ENCODE measurements at regions of chr11 and their contacts with region 1.

Region 1: DNA sequence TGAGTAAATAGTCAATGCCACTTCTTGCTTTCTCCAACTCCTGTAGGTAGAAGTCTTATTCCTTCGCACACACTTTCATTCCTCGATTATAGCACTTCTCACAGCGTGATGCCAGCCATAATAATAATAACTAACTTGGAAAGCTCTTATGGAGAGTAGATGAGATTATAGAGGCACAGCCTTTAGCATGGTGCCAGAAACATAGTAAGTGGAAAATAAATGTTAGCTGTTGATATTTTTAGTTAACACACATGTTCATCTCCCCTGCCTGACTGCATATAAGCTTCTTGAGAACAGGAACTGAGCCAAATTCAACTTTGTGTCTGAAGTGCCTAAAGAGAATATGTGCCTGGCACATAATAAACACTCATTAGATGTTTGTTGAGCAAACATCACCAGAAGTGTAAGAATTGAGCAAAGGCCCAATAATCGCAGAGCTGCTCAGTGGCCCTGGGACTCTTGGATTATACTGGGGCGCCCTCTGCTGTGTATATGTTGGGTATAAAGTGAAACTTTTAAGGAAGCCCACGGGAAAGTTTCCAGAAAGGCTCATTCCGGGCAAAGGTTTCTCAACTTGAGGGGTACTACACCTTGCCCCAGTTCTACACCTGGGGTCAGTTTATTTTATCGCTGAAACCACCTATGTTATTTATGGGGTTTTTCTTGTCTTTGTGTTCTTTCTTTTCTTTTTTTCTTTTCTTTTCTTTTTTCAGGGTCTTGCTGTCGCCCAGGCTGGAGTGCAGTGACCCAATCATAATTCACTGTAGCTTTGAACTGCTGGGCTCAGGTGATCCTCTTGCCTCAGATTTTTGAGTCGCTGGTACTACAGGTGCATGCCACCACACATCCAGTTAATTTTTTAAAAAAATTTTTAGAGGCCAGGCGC is 22.3 kb downstream of the SLN start:
- DNase-seq: peak; percentile 60
- H3K4me3 Mint-ChIP-seq: no peak overlapping the region
- H3K27ac Mint-ChIP-seq: no peak overlapping the region
- H3K4me1 Mint-ChIP-seq: peaks cover 4% of the 10 kb centered on the region
- H3K27me3 Mint-ChIP-seq: peaks cover 21% of the 10 kb centered on the region

Region 2: DNA sequence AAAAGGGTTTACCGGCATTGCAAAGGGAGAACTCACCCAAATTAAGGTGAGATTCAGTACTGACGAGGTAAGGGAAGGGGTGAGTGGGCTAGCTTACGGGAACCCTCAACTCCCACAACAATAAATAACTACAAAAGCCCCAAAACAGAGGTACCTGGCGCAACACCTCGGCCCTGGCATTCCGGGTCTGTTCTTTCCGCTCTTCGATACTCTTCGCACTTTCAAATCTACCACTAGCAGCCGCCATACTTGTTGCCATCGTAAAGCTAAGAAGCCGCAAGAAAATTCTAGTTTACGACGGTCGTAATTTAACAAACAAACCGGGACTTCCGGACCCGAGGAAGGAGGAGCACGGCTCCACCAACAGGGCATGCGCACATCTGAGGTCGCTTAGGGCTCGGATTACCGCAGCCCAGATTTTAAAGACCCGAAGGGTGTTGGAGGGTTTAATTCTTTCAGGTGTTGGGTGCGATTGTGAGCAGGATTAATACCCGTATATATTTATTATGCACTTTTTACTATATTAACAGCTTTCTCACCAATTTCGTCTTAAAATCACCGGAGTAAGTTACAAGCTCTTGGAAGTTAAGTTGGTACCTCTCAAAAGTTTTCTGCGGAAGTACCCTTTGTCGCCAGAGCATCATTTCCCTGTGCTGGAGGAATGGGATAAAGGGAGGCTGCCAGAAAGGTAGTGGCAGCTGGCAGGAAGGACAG is 231.8 kb before region 1 on chr11 and contains the start of gene CWF19L2:
- CTCF ChIA-PET with region 1: no interaction called
- POLR2A ChIA-PET with region 1: no interaction called
- DNase-seq: peak; percentile 92
- H3K4me3 Mint-ChIP-seq: peak within 1 kb of the TSS; percentile 82
- H3K27ac Mint-ChIP-seq: peak within 1 kb of the TSS; percentile 73
- H3K4me1 Mint-ChIP-seq: peaks cover 28% of the 10 kb centered on the region
- H3K27me3 Mint-ChIP-seq: peaks cover 1% of the 10 kb centered on the region
- total RNA-seq, gene CWF19L2: 12.3 to 14.2 TPM

Region 3: DNA sequence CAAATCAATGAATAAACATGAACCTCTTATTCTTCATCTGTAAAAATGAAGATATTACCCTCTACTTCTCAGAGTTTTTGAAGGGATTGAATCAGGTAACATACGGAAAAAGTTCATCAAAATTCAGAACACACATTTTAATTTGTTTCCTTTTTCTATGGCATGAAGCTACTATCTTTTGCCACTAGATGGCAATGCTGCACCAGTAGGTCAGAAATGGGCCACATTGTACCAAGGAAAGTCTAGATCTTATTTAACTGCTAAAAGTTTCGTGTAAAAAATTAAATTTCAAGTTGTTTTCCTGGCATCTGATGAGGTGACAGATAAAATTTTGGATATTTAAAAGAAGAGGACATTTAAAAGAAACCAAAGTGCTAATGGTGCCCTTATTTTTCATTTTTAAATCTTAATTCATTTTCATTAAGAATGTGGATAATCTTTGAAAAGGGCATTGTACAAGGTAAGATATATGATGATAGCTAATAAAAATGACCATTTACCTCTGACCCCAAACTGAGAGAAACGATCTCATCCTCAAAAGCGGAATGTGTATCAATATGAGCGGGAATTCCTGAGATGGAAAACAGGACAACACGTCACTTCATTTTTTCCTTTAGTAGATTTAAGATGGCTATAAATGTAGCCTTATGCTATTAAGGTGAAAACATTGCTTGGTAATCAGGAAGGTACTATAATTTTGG is 140.2 kb before region 1 on chr11:
- CTCF ChIA-PET with region 1: interaction called, 25 read pairs
- POLR2A ChIA-PET with region 1: no interaction called
- DNase-seq: peak; percentile 25
- H3K4me3 Mint-ChIP-seq: no peak overlapping the region
- H3K27ac Mint-ChIP-seq: no peak overlapping the region
- H3K4me1 Mint-ChIP-seq: no peaks in the 10 kb centered on the region
- H3K27me3 Mint-ChIP-seq: no peaks in the 10 kb centered on the region

Region 4: DNA sequence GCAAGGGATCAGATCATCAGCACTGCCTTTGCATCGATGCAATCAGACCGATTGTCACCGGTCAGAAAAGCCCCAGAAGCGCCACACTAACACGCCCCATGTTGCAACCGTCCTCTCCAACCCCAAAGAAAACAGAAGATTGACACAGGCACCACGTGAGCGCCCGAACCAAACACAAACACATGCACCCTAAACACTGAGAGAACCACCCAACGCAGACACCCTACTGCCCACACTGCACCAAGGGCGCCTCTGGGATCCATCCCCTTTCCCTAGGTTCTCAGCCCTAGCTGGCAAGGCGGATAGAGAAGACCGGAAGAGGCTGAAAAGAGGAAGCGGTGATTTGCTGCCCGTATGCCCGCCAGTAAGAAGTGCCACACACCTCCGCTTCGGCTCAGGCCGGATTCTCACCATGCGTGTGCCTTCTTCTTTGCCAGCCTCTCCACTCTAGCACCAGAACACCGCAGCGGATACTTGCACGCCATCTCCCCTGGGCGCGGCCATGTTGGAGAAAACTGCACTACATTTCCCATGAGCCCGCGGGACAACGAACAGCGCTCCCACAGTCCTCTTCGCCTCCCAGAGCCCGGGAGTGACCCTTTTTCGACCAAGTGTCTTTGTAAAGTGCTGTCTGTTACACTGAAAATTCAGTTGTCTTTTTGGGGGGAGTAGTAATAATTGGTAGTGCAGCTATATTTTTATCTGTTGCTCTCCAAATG is 124.2 kb before region 1 on chr11 and contains the start of gene ALKBH8:
- CTCF ChIA-PET with region 1: interaction called, 26 read pairs
- POLR2A ChIA-PET with region 1: interaction called, 4 read pairs
- DNase-seq: peak; percentile 84
- H3K4me3 Mint-ChIP-seq: peak within 1 kb of the TSS; percentile 92
- H3K27ac Mint-ChIP-seq: peak within 1 kb of the TSS; percentile 91
- H3K4me1 Mint-ChIP-seq: peaks cover 53% of the 10 kb centered on the region
- H3K27me3 Mint-ChIP-seq: no peaks in the 10 kb centered on the region
- total RNA-seq, gene ALKBH8: 7.7 to 8.4 TPM

Region 5: DNA sequence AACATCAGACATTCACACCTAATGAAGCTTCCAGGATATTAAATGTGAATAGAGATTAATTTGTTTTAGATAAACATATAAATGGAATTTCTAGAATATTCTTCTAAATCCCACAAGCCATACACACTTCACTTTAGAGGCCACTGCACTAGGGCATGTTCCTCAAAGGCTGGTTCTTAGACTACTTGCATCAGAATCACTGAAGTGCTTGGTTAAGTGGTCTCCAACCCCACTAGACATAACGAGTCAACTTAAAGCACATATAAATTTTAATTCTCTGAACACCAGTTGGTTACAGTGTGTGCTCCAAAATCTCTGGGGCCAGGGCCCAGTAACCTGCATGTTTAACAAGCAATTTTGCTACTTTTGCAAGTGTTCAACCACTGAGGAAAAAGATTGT is 116.1 kb before region 1 on chr11:
- CTCF ChIA-PET with region 1: interaction called, 27 read pairs
- POLR2A ChIA-PET with region 1: no interaction called
- DNase-seq: no peak
- H3K4me3 Mint-ChIP-seq: no peak overlapping the region
- H3K27ac Mint-ChIP-seq: no peak overlapping the region
- H3K4me1 Mint-ChIP-seq: no peaks in the 10 kb centered on the region
- H3K27me3 Mint-ChIP-seq: peaks cover 6% of the 10 kb centered on the region